HAP-1 (cell line): ENCODE measurements at regions of chr11 and their contacts with region 1.

Region 1: GRCh38 chr11:117807482-117808327 is 10.7 kb upstream of the DSCAML1 start:
- DNase-seq: peak; percentile 49 to 87
- H3K4me3 ChIP-seq: no peak overlapping the region
- H3K4me1 ChIP-seq: no peaks in the 10 kb centered on the region
- H3K27me3 ChIP-seq: peaks cover 7% of the 10 kb centered on the region; the same call in 1 of the 2 replicates

Region 2: DNA sequence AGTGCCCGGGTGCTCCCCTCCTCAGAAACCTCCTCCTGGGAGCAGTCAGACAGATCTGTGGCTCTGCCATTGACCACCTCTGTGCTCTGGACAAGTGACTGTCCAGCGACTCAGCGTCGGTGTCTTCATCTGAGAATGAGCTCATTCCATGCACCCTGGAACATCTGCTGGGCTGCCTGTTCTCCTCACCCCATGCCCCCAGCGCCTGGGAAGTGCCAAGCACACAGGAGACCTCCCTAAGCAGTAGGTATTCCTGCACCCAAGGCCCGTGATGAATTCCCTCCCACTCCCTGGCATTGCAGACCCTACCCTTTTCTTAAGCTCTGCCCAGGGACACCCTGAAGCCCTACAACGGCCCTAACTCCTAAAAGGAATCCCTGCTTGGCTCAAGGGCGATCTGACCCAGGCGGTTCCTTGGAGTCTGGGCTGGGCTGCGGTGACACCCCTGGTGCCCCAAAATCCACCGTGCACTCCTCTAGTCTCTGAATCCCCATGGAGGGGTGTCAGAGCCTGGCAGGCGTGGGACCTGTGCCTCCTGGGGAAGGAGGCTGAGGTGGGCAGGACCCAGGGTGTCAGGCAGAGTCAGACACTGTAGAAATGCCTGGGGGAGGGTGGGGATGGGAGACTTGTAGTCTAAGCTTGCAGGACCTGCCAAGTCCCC is 388.1 kb before region 1 on chr11:
- in situ Hi-C with region 1: loop called (anchors 5 kb)
- DNase-seq: no peak
- H3K4me3 ChIP-seq: no peak overlapping the region
- H3K4me1 ChIP-seq: no peaks in the 10 kb centered on the region
- H3K27me3 ChIP-seq: no peaks in the 10 kb centered on the region

Region 3: DNA sequence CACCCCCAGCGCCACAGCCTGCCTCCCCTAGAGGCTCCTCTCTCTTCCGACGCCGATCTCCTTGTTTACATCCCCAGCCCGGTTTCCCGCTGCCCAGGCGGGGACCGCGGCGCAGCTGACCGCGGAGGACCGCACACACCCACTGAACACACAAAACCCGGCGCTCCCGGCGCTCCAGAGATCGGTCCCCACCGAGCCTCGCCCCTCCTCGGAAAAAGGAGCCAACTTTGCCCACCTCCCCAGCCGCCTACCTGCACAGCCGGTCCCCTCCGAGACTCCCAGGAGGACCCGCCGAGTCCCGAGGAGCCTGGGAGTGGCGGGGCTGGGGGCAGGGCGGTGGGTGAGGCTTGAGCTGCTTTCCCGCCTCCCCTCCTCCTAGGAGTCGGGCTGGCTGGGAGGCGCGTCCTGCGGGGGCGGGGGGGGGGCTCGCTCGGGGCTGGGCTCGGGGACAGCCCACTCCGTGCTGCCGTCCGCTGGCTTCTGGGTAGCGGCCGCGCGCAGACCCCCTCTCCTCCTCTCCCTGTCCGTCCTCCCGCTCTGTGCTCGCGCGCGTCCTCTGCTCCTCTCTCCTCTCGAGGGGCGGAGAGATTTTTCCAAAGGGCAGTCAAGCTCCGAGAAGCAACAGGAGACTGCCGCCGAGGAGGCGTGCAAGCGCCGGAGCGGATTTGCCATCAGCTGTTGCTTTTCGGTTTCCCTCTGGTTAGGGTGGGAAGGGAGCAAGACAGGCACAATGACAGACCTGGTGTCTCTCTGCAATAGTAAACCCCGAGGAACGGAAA is 68.8 kb after region 1 on chr11 and contains the start of gene FXYD6:
- in situ Hi-C with region 1: no loop called
- DNase-seq: peak; percentile 74 to 86
- H3K4me3 ChIP-seq: peak within 1 kb of the TSS; percentile 91
- H3K4me1 ChIP-seq: peaks cover 17% of the 10 kb centered on the region
- H3K27me3 ChIP-seq: no peaks in the 10 kb centered on the region

Region 4: GRCh38 chr11:118051611-118052461 is 244.1 kb after region 1 on chr11:
- in situ Hi-C with region 1: loop called (anchors 10 kb)
- DNase-seq: no peak
- H3K4me3 ChIP-seq: no peak overlapping the region
- H3K4me1 ChIP-seq: no peaks in the 10 kb centered on the region
- H3K27me3 ChIP-seq: peaks cover 8% of the 10 kb centered on the region